Pancreas (tissue), 10 donors: ENCODE measurements at regions of chr3 and their contacts with region 1.

Region 1: DNA sequence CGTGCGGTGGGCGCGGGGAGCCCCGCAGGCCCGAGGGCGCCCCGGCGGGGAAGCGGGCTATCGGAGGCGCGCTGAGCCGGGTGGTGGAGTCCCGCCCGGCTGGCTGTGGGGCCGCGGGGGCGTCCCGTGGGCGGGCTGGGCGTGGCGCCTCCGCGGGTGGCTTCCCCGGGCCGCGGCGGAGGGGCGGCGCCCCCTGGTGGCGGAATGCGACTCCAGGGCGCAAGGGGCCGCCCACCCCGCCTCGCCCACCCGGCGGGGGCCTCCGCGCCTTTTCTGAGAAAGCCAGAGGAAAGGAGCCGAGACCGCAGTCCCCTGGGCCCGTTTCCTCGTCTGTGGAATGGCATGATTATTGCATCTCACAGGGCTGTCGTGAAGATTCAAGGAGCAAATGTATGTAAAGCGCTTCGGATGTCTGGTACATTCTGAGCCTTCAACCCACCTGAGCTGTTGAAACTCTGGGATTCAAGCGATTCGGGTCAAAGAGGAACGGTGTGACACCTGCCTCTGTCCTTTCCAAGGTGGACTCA is 31.9 kb upstream of the RAB6B start:
- DNase-seq: peak in 5 of 6 donors; percentile 37 to 90 (median 52)
- ATAC-seq: peak; percentile 88 to 93 (median 90)
- H3K4me3 ChIP-seq: peak overlapping the region; percentile 34 to 69 (median 56)
- H3K27ac ChIP-seq: no peak overlapping the region
- H3K4me1 ChIP-seq: peaks cover 0 to 3% (median 0%) of the 10 kb centered on the region in 3 donors
- H3K27me3 ChIP-seq: no peaks in the 10 kb centered on the region
- CTCF ChIP-seq: peak; percentile 61 to 80 (median 74)

Region 2: DNA sequence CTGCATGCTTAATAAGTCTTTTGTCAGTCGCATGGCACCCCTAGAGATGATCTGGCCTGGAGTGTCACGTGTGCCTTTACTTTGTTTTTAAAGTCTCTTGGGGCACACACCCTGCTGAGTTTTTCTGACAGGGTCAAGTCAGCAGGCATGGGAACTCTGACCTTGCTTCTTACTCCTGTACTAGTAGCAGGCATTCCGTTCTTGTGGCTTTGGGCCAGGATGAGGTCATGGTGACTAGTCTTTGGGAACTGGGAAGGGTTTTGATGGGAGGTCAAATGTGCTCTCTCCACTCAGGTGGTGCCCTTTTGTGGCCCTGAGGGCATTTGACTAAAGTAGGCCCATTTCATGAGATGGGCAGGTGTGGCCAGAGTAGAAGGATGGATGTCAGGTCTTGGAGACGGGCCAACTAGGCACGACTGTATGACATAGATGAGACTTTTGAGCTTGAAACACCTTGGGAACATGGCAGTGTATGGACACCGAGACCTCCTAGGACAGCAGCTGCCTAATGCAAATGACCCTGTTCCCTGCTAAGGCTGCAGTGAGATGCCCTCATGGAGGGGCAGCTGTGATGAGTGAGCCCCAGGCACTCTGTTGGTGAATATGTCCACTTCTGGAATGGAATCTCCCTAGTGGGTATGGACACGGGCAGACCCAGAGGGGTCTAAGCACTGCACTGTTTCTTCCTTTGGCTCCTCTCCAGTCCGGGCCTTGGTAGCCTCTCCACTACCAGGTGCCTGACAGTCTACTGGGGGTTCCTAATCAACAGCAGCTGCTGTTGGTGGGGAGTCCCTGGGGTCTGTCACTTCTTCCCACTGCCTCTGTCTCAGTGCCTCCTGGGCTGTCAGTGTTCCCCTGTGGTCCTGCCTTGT is 105.6 kb before region 1 on chr3:
- intact Hi-C with region 1: loop called in 1 of 3 experiments (anchors 5 kb)
- DNase-seq: peak; percentile 60 to 96 (median 86)
- ATAC-seq: peak; percentile 61 to 89 (median 88)
- H3K4me3 ChIP-seq: no peak overlapping the region
- H3K27ac ChIP-seq: no peak overlapping the region
- H3K4me1 ChIP-seq: no peaks in the 10 kb centered on the region
- H3K27me3 ChIP-seq: no peaks in the 10 kb centered on the region
- CTCF ChIP-seq: peak in 2 of 4 donors; percentile 12 to 32